Mammary epithelial cell (primary cell): ENCODE measurements at regions of chr1 and their contacts with region 1.

Region 1: DNA sequence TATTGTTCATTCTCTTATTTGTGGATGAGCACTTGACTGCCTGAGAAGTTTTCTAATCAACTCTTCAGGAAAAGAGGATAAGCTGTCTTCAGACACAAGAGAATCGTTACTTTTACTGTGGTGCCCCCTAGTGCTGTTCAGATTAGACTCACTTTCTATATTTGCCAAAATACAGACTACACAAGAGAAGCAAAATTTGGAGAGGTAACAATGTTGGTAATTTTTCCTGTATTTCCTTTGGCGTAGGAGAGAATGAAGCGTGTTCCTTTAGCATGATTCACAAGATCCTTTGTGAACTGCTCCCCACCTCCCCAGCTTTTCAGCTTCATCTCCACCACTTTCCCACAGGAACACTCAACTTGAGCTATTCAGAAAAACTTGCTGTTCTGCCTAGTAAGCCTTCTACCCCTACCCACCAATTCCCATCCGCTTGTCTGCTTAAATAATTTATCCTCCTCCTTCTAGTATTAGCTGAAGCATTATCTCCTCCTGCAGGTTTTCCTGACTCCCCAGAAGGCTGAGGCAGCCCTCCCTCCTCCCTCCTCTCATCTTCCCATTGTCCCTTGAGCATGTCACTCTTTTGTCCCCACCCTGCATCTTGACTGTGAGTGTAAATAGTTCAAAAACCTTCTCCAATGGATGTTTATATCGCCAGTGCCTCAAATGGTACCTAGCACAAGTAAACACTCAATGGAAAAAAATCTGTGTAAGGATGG is 4.5 kb downstream of the TNFSF4 start:
- DNase-seq: peak; percentile 66
- H3K4me3 ChIP-seq: no peak overlapping the region
- H3K27ac ChIP-seq: no peak overlapping the region
- H3K4me1 ChIP-seq: peaks cover 12% of the 10 kb centered on the region
- H3K27me3 ChIP-seq: no peaks in the 10 kb centered on the region
- CTCF ChIP-seq: peak; percentile 58 to 70

Region 2: DNA sequence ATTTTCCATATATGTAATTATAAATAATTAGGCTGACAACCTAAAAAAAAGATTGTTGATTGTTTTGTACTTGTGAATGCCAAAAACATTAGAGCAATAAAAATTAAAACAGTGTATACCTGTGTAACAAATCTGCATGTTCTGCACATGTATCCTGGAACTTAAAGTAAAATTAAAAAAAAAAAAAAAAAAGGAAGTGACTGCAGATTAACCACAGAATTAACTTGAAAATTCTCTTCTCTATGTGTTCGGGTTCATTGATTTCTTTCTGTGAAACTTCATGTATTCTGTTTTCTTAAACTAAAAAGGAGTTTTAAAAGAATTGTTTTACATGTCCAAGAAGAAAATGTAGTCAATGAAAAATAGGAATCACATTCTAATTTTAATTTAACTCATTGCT is 448.0 kb before region 1 on chr1:
- CTCF ChIA-PET with region 1: interaction called, 14 read pairs
- dilution Hi-C with region 1: no loop called
- in situ Hi-C with region 1: loop called (anchors 10 kb)
- intact Hi-C with region 1: no loop called
- DNase-seq: no peak
- H3K4me3 ChIP-seq: no peak overlapping the region
- H3K27ac ChIP-seq: no peak overlapping the region
- H3K4me1 ChIP-seq: no peaks in the 10 kb centered on the region
- H3K27me3 ChIP-seq: no peaks in the 10 kb centered on the region
- CTCF ChIP-seq: no peak

Region 3: DNA sequence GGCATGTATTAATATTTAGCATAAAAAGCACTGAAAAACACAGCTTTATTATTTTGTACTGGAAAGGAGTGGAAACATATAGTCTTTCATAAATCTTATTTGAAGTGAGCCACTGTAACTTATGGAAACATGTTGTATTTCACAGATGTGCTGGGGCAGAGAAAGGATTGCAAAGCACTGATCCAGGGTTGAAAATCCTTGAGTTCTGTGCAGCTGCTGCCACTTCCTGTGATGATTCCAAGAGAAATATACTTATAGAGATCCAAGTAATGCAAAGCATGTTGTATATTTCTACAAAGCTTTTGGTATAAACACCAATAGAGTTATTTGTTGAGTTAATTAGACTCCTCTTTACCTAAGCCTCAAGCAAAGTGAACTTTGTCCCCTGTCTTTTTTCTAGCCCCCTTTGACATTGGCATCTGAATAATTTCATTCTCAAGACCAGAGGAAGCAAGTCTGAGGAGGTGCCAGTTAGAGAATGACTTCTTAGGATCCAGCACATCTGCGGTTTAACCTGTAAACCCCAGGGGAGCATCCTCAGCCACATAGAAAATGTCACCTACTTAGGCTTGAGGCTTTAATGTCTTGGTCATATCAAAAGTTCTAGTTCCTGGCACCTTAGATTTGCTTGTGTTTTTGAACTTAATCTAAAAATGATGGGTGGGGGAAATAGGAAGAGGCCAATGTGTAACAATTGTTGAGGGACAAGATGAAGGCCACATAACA is 370.4 kb before region 1 on chr1:
- CTCF ChIA-PET with region 1: no interaction called
- dilution Hi-C with region 1: loop called (anchors 5 kb)
- in situ Hi-C with region 1: loop called in 1 of 2 experiments (anchors 5 kb)
- intact Hi-C with region 1: no loop called
- DNase-seq: no peak
- H3K4me3 ChIP-seq: no peak overlapping the region
- H3K27ac ChIP-seq: no peak overlapping the region
- H3K4me1 ChIP-seq: peaks cover 4% of the 10 kb centered on the region
- H3K27me3 ChIP-seq: no peaks in the 10 kb centered on the region
- CTCF ChIP-seq: no peak

Region 4: GRCh38 chr1:172969611-172970010 is 233.0 kb before region 1 on chr1:
- CTCF ChIA-PET with region 1: no interaction called
- dilution Hi-C with region 1: no loop called
- in situ Hi-C with region 1: no loop called
- intact Hi-C with region 1: loop called (anchors 5 kb)
- DNase-seq: peak; percentile 32
- H3K4me3 ChIP-seq: no peak overlapping the region
- H3K27ac ChIP-seq: peak overlapping the region; percentile 90
- H3K4me1 ChIP-seq: peaks cover 57% of the 10 kb centered on the region
- H3K27me3 ChIP-seq: no peaks in the 10 kb centered on the region
- CTCF ChIP-seq: no peak

Region 5: GRCh38 chr1:173002891-173003838 is 199.4 kb before region 1 on chr1:
- CTCF ChIA-PET with region 1: no interaction called
- dilution Hi-C with region 1: no loop called
- in situ Hi-C with region 1: no loop called
- intact Hi-C with region 1: loop called (anchors 10 kb)
- DNase-seq: peak; percentile 88
- H3K4me3 ChIP-seq: no peak overlapping the region
- H3K27ac ChIP-seq: peak overlapping the region; percentile 27
- H3K4me1 ChIP-seq: peaks cover 13% of the 10 kb centered on the region
- H3K27me3 ChIP-seq: no peaks in the 10 kb centered on the region
- CTCF ChIP-seq: no peak

Region 6: GRCh38 chr1:173255214-173255813 is 52.7 kb after region 1 on chr1:
- CTCF ChIA-PET with region 1: no interaction called
- dilution Hi-C with region 1: no loop called
- in situ Hi-C with region 1: no loop called
- intact Hi-C with region 1: no loop called
- DNase-seq: peak; percentile 21
- H3K4me3 ChIP-seq: no peak overlapping the region
- H3K27ac ChIP-seq: no peak overlapping the region
- H3K4me1 ChIP-seq: peaks cover 4% of the 10 kb centered on the region
- H3K27me3 ChIP-seq: no peaks in the 10 kb centered on the region
- CTCF ChIP-seq: peak; percentile 82 to 85